ENCODE measurements at regions of chr7 and their contacts with region 1.

Region 1: DNA sequence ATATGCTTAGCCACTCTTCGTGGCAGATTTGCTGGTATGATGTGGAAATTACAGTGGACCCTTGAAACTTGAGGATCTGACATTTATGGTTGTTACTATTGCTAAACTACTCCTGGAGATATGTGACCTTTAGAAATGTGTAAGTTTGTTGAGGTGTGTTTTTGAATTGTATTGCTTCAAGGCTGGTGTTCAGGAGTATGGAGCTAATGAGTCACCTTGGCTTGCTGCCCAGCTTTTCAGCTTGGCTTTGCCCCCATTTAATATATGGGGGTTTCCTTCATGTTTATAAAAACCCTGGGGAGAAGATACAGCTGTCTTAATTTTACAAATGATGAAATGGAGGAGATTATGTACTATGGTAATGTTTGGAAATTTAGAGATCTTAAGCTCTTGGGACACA is 11.6 kb downstream of the HBP1 start:
- DNase-seq: peak in 24 of 35 experiments; percentile 8 to 67 (median 21)
- ATAC-seq: peak; percentile 21 to 81 (median 54)
- H3K4me3 ChIP-seq: no peak overlapping the region
- H3K4me3 Mint-ChIP-seq: peak overlapping the region in 2 of 3 donors; percentile 13 to 32
- H3K27ac ChIP-seq: no peak overlapping the region
- H3K27ac Mint-ChIP-seq: peak overlapping the region; percentile 45 to 79
- H3K4me1 ChIP-seq: peaks cover 4 to 12% of the 10 kb centered on the region in 2 experiments
- H3K4me1 Mint-ChIP-seq: peaks cover 61 to 65% (median 63%) of the 10 kb centered on the region in 3 donors
- H3K27me3 ChIP-seq: no peaks in the 10 kb centered on the region
- H3K27me3 Mint-ChIP-seq: no peaks in the 10 kb centered on the region

Region 2: GRCh38 chr7:107122486-107122911 is 57.9 kb before region 1 on chr7:
- CTCF ChIA-PET with region 1: interaction called in 1 of 2 experiments, 4 read pairs
- POLR2A ChIA-PET with region 1: interaction called in 1 of 2 experiments, 17 read pairs
- DNase-seq: no peak
- ATAC-seq: no peak
- H3K4me3 ChIP-seq: no peak overlapping the region
- H3K4me3 Mint-ChIP-seq: no peak overlapping the region
- H3K27ac ChIP-seq: no peak overlapping the region
- H3K27ac Mint-ChIP-seq: no peak overlapping the region
- H3K4me1 ChIP-seq: peaks cover 9 to 14% of the 10 kb centered on the region in 2 experiments
- H3K4me1 Mint-ChIP-seq: peaks cover 17 to 23% (median 20%) of the 10 kb centered on the region in 3 donors
- H3K27me3 ChIP-seq: no peaks in the 10 kb centered on the region
- H3K27me3 Mint-ChIP-seq: peaks cover 0 to 5% of the 10 kb centered on the region in 2 donors

Region 3: GRCh38 chr7:107194049-107194448 is 13.7 kb after region 1 on chr7:
- CTCF ChIA-PET with region 1: interaction called, 4 to 6 read pairs
- POLR2A ChIA-PET with region 1: interaction called, 13 to 19 read pairs
- DNase-seq: no peak
- ATAC-seq: no peak
- H3K4me3 ChIP-seq: no peak overlapping the region
- H3K4me3 Mint-ChIP-seq: no peak overlapping the region
- H3K27ac ChIP-seq: no peak overlapping the region
- H3K27ac Mint-ChIP-seq: peak overlapping the region; percentile 2 to 5
- H3K4me1 ChIP-seq: no peaks in the 10 kb centered on the region
- H3K4me1 Mint-ChIP-seq: peaks cover 5 to 14% (median 8%) of the 10 kb centered on the region in 3 donors
- H3K27me3 ChIP-seq: no peaks in the 10 kb centered on the region
- H3K27me3 Mint-ChIP-seq: no peaks in the 10 kb centered on the region

Region 4: GRCh38 chr7:107208024-107208521 is 27.7 kb after region 1 on chr7:
- CTCF ChIA-PET with region 1: interaction called in 1 of 2 experiments, 4 read pairs
- POLR2A ChIA-PET with region 1: interaction called, 3 to 12 read pairs
- DNase-seq: no peak
- ATAC-seq: no peak
- H3K4me3 ChIP-seq: no peak overlapping the region
- H3K4me3 Mint-ChIP-seq: no peak overlapping the region
- H3K27ac ChIP-seq: no peak overlapping the region
- H3K27ac Mint-ChIP-seq: peak overlapping the region; percentile 24 to 50
- H3K4me1 ChIP-seq: no peaks in the 10 kb centered on the region
- H3K4me1 Mint-ChIP-seq: no peaks in the 10 kb centered on the region
- H3K27me3 ChIP-seq: no peaks in the 10 kb centered on the region
- H3K27me3 Mint-ChIP-seq: no peaks in the 10 kb centered on the region